Heart left ventricle (tissue), 16 donors: ENCODE measurements at regions of chr17 and their contacts with region 1.

Region 1: DNA sequence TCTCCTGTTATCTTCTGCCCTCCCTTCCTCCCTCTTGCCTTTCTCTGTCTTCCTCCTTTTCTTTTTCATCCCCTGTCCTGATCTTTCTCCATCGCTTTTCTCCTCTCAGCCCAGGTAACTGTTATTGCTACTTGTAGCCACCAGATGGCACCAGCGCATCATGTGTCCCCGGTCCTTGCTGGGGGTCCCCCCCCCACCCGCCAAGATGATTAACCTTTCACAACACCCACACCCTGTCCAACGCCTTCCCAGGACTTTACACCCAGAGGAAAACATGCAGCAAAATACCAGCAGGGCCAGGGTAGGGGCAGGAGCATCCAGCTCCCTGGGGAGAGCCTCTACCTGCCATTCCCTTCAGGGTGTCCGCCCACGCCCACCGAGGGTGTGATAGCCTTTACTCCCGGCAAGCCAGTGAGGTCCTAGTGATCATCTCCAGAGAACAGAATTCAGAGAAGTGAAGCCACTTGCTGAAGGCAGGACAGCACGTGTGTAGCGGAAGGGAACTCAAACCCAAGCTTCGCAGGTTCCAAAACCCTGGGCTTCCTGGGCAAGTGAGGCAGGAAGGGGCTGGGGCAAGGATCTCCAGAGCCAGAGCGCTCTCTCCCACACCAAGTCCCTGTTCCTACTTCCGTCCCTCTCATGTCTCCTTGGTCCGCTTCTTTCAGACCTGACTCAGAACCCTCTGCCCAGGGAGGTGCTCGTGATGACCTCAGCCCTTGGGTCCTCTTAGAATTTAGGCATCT is 13.5 kb upstream of the TAC4 start:
- DNase-seq: peak in 1 of 5 donors; percentile 58
- ATAC-seq: peak in 2 of 4 donors; percentile 47 to 59
- H3K4me3 ChIP-seq: no peak overlapping the region
- H3K27ac ChIP-seq: no peak overlapping the region
- H3K4me1 ChIP-seq: peaks cover 0 to 14% (median 0%) of the 10 kb centered on the region in 12 donors
- H3K27me3 ChIP-seq: peaks cover 0 to 9% (median 0%) of the 10 kb centered on the region in 9 donors
- CTCF ChIP-seq: peak; percentile 75 to 90 (median 86)
- POLR2A ChIP-seq: no peak

Region 2: GRCh38 chr17:49809056-49809455 is 52.3 kb before region 1 on chr17:
- intact Hi-C with region 1: no loop called
- DNase-seq: no peak
- ATAC-seq: no peak
- H3K4me3 ChIP-seq: no peak overlapping the region
- H3K27ac ChIP-seq: no peak overlapping the region
- H3K4me1 ChIP-seq: peaks cover 0 to 8% (median 0%) of the 10 kb centered on the region in 12 donors
- H3K27me3 ChIP-seq: no peaks in the 10 kb centered on the region
- CTCF ChIP-seq: no peak
- POLR2A ChIP-seq: no peak

Region 3: GRCh38 chr17:50079334-50080095 is 218.2 kb after region 1 on chr17:
- intact Hi-C with region 1: loop called in 3 of 10 experiments (anchors 10 kb)
- DNase-seq: peak in 1 of 5 donors; percentile 40
- ATAC-seq: peak in 3 of 4 donors; percentile 10 to 38 (median 29)
- H3K4me3 ChIP-seq: no peak overlapping the region
- H3K27ac ChIP-seq: peak overlapping the region in 2 of 12 donors; percentile 14 to 18
- H3K4me1 ChIP-seq: peaks cover 0 to 18% (median 1%) of the 10 kb centered on the region in 12 donors
- H3K27me3 ChIP-seq: no peaks in the 10 kb centered on the region
- CTCF ChIP-seq: peak in 5 of 12 donors; percentile 12 to 41 (median 21)
- POLR2A ChIP-seq: no peak

Region 4: GRCh38 chr17:50087246-50087911 is 226.1 kb after region 1 on chr17:
- intact Hi-C with region 1: loop called in 2 of 10 experiments (anchors 10 kb)
- DNase-seq: peak; percentile 60 to 86 (median 71)
- ATAC-seq: peak; percentile 66 to 91 (median 87)
- H3K4me3 ChIP-seq: no peak overlapping the region
- H3K27ac ChIP-seq: no peak overlapping the region
- H3K4me1 ChIP-seq: no peaks in the 10 kb centered on the region
- H3K27me3 ChIP-seq: no peaks in the 10 kb centered on the region
- CTCF ChIP-seq: peak in 11 of 12 donors; percentile 92 to 99 (median 97)
- POLR2A ChIP-seq: no peak